Activated T-helper 2 cell treated with anti-CD3 and anti-CD28 coated beads, Interferon-gamma antibody, Interleukin-2, Interleukin-4, amounts not matched to agents 10 μg/mL and 5 μg/mL and 100 μg/mL, durations not matched to agents 14 hours and 24 hours and 36 hours (primary cell): ENCODE measurements at regions of chr6 and their contacts with region 1.

Region 1: DNA sequence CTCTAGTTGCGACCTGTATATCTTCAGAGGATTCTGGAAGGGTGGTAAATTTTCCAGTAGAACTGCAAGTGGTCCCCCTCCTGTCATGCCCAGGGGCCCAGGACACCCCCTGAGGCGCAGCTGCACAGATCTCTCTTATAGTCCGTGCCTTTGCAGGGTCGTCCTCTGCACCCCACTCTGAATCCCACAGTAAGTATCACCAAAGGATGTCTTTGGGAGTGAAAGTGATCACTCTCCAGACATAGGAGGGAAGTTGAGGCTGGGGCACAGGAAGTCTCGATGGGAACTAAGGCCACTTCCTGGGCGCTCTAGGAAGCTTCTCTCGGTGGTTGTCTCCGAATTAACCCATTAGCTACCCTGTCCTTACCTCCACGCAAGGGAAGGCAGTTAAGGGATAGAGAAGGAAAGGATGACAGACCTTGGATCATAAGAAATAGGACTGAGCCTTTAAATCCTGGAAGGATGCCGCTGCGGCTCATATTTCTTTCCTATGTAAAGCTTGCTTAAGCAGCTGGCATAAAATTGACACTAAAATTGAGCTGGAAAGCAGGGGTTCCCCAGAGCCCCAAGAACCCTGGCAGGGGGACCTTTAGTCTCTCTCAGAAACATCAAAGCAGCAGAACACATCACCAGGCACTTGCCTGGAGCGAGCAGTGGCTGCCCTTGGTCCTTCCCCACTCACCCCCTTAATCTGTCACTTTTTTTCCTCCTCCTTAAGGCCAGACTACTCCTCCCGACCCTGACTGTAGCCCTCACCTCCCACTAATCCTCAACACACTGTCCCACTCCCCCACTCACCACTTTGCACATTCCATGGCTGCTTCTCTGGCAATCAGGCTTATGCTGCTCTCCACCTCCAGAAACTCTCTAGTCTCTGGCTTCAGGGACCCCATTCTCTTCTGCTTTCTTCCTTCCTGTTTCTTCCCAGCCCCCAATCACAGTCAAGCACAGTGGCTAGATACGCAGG is at the start of gene ZKSCAN4:
- DNase-seq: peak; percentile 67
- H3K4me3 Mint-ChIP-seq: peak within 1 kb of the TSS; percentile 98
- H3K27ac Mint-ChIP-seq: peak within 1 kb of the TSS; percentile 78
- H3K4me1 Mint-ChIP-seq: peaks cover 13% of the 10 kb centered on the region
- H3K27me3 Mint-ChIP-seq: no peaks in the 10 kb centered on the region
- total RNA-seq, gene ZKSCAN4: 4.6 and 5.0 TPM in 2 replicates

Region 2: GRCh38 chr6:28225056-28225834 is 27.0 kb before region 1 on chr6 and contains the start of gene ZSCAN9:
- intact Hi-C with region 1: loop called (anchors 1 kb)
- DNase-seq: no peak
- H3K4me3 Mint-ChIP-seq: peak within 1 kb of the TSS; percentile 88
- H3K27ac Mint-ChIP-seq: peak within 1 kb of the TSS; percentile 82
- H3K4me1 Mint-ChIP-seq: peaks cover 35% of the 10 kb centered on the region
- H3K27me3 Mint-ChIP-seq: peaks cover 16% of the 10 kb centered on the region
- total RNA-seq, gene ZSCAN9: 9.7 and 10.8 TPM in 2 replicates

Region 3: GRCh38 chr6:28266962-28267694 is 14.8 kb after region 1 on chr6 and contains the start of gene ZSCAN26:
- intact Hi-C with region 1: loop called (anchors 1 kb)
- DNase-seq: peak; percentile 79
- H3K4me3 Mint-ChIP-seq: no peak within 1 kb of the TSS
- H3K27ac Mint-ChIP-seq: no peak within 1 kb of the TSS
- H3K4me1 Mint-ChIP-seq: peaks cover 28% of the 10 kb centered on the region
- H3K27me3 Mint-ChIP-seq: peaks cover 10% of the 10 kb centered on the region
- total RNA-seq, gene ZSCAN26: 6.1 and 7.7 TPM in 2 replicates

Region 4: GRCh38 chr6:28281288-28282064 is 29.2 kb after region 1 on chr6 and contains the start of gene PGBD1:
- intact Hi-C with region 1: loop called (anchors 1 kb)
- DNase-seq: peak; percentile 40
- H3K4me3 Mint-ChIP-seq: peak within 1 kb of the TSS; percentile 85
- H3K27ac Mint-ChIP-seq: no peak within 1 kb of the TSS
- H3K4me1 Mint-ChIP-seq: peaks cover 12% of the 10 kb centered on the region
- H3K27me3 Mint-ChIP-seq: no peaks in the 10 kb centered on the region
- total RNA-seq, gene PGBD1: 3.4 and 3.8 TPM in 2 replicates